Sciatic nerve (tissue), 2 donors: ENCODE measurements at regions of chr5 and their contacts with region 1.

Region 1: DNA sequence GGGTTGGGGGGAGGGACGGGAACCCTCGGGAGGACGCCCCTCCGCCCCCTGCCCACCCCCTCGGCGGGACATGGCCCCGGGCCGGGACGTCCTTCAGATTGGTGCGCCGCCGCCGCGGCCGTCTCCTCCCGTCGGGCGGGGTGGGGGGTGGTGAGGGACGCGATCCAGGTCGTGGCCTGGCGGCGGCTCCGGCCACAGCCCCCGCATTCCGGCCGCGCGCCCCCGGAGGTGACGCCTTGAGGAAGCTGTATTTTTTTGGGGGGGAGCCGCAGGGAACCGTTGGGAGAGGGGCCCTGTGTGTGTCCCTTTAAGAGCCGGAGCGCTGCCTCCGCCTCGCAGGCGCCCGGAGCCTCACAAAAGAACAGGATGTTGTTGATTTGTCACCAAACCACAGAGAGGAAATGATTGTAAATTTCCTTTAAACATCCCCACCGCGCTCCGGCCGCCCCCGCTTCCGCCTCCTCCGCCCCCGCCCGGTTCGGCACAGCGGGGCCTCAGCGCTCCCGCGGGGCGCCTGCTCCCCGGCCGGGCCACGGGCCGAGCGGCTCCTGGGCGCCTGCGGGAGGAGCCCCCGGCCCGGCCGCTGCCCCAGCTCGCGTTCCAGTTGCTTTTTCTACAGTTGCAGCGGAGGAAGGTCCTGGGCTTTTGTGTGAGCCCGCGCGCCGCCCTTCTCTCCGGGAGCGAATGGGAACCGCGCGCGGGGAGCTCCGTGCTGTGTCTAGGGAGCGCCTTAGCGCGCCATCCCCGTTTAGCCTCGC is 32.1 kb upstream of the SPRY4 start:
- DNase-seq: peak; percentile 89
- ATAC-seq: peak; percentile 87

Region 2: DNA sequence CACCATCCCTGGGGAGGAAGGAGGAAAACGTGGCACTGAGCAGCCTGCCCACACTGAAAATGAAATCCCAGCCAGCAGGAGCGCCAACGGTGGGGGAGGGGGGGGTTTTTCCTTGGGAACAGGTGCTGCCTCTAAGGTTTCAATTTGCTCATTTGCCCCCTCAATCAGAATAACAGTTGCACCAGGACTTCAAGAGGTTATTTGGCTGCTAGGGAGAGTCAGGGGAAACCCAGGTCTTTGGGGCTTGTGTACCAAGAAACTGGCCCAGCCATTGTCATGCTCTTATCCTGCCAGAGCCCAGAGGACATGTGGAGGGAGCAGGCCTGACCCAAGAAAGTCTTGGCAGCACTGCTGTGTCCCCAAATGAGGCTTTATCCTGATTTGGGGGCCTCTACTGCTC is 181.9 kb before region 1 on chr5:
- intact Hi-C with region 1: no loop called
- DNase-seq: no peak
- ATAC-seq: no peak

Region 3: DNA sequence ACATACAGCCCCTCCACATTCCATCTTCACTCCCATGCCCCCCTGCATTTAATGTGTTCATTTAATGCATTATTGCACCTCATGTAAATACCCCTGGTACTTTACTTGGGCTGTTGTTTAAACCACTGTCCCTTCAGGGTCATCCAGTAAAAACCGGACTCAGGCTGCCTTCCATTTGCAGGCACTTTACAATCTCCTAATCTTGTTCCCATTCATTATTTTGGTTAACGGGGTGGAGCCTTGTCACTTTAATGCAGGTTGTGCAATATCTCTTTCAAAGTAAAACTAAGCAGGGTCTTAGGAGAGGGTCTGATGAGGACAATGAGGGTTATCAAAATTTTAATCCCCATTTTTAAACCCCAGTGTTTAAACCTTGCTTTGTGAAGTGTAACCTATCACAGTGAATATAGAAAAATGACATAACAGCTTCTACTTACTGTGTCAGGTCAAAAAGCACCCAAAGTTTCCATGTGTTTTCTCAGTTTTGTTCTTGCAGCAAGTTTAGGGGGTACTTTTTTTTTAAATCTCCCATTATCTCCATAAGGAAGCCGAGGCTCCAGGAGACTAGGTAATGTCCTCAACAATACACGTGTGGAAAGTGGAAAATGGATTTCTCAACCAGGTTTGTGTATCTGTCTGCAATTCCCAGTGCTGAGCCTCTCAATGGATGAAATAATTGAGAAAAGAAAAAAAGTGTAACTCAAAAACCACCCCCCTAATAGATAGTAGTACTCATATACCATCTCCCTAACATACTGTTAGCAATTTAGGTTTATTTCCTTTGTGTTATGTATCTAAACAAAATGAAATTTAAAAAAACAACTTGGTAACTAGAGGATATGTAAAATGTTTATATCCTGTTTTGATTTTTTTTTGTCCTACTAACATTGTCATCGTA is 22.1 kb after region 1 on chr5:
- intact Hi-C with region 1: loop called (anchors 1 kb)
- DNase-seq: no peak
- ATAC-seq: no peak

Region 4: DNA sequence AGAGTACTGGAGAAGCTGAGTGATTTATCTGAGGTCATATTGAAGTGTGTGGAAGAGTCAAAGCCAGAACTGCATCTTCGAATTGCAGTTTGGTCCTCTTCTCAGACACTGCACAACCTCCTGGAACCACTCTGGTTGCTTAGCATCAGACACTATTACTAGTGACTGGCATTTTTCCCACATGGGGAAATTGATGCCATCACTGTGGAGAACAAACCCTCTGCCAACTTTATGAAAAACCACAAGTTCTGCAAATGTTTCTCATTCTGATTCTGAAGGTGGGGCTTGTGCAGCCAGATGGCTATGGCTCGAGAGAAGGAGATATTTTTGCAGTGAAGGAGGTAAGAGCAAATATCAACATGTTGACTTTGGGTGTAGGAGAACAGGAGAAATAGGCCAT is 1881.0 kb after region 1 on chr5:
- intact Hi-C with region 1: no loop called
- DNase-seq: no peak
- ATAC-seq: peak; percentile 74